A549 (cell line): ENCODE measurements at regions of chr5 and their contacts with region 1.

Region 1: GRCh38 chr5:150350524-150351344 is 6.8 kb upstream of the TCOF1 start:
- DNase-seq: peak; percentile 83 to 84
- ATAC-seq: peak; percentile 94 to 96
- H3K4me3 ChIP-seq: no peak overlapping the region
- H3K27ac ChIP-seq: peak overlapping the region; percentile 46 to 72; a peak in 5 of 6 replicates
- H3K4me1 ChIP-seq: peaks cover 24% of the 10 kb centered on the region
- CTCF ChIP-seq: peak; percentile 93
- EP300 ChIP-seq: no peak
- POLR2A ChIP-seq: no peak
- RAD21 ChIP-seq: peak; percentile 97

Region 2: GRCh38 chr5:150143350-150144245 is 207.1 kb before region 1 on chr5:
- CTCF ChIA-PET with region 1: no interaction called
- POLR2A ChIA-PET with region 1: no interaction called
- DNase-seq: peak; percentile 57 to 62
- ATAC-seq: peak; percentile 75
- H3K4me3 ChIP-seq: no peak overlapping the region
- H3K27ac ChIP-seq: peak overlapping the region; percentile 93 to 98
- H3K4me1 ChIP-seq: peaks cover 57% of the 10 kb centered on the region
- CTCF ChIP-seq: no peak
- EP300 ChIP-seq: peak in 1 of 2 experiments; percentile 28; a peak in 1 of 5 replicates
- POLR2A ChIP-seq: no peak
- RAD21 ChIP-seq: no peak

Region 3: GRCh38 chr5:150161242-150162141 is 189.2 kb before region 1 on chr5:
- CTCF ChIA-PET with region 1: interaction called, 59 read pairs
- POLR2A ChIA-PET with region 1: no interaction called
- DNase-seq: peak; percentile 82 to 92
- ATAC-seq: peak; percentile 89 to 95
- H3K4me3 ChIP-seq: peak overlapping the region; percentile 37
- H3K27ac ChIP-seq: peak overlapping the region; percentile 75 to 79
- H3K4me1 ChIP-seq: peaks cover 8% of the 10 kb centered on the region; the same call in 1 of the 3 replicates
- CTCF ChIP-seq: peak; percentile 67
- EP300 ChIP-seq: no peak
- POLR2A ChIP-seq: no peak
- RAD21 ChIP-seq: peak; percentile 70 to 87

Region 4: DNA sequence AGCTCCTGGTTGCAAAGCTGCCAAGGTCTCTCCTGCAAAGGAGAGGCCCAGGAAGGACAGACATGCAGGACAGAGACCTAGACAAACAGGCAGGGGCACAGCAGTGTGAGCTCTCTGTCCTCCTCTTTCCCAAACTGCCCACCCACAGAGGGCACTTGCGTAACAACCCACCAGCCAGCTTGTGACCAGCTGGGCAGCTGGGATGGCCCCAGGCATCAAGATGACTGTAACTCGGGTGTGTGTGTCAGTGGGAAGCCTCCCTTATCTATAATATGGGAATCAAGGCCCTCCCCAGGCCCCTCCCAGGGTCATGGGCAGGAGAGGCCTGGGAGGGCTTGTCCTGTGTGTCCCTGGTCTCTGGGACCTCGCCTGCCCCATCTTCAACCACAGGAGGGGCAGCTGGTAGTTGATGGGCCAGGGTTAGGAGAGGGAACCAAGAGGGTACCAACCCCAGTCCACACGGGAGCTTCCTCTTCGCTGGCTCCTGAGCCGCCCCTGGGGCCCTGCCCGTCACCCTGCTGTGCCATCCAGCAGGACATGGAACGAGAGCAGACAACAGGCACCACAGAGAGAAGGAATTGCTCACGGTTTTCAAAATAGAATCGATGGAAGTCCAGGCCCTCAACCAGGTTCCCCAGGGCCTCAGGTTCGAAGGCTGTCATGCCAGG is 123.0 kb before region 1 on chr5:
- CTCF ChIA-PET with region 1: interaction called, 23 read pairs
- POLR2A ChIA-PET with region 1: no interaction called
- DNase-seq: peak in 1 of 2 experiments; percentile 7
- ATAC-seq: peak; percentile 23 to 37; a peak in 4 of 6 replicates
- H3K4me3 ChIP-seq: no peak overlapping the region
- H3K27ac ChIP-seq: peak overlapping the region in 1 of 2 experiments; percentile 30; a peak in 1 of 6 replicates
- H3K4me1 ChIP-seq: peaks cover 7% of the 10 kb centered on the region; the same call in 1 of the 3 replicates
- CTCF ChIP-seq: no peak
- EP300 ChIP-seq: no peak
- POLR2A ChIP-seq: no peak
- RAD21 ChIP-seq: no peak

Region 5: DNA sequence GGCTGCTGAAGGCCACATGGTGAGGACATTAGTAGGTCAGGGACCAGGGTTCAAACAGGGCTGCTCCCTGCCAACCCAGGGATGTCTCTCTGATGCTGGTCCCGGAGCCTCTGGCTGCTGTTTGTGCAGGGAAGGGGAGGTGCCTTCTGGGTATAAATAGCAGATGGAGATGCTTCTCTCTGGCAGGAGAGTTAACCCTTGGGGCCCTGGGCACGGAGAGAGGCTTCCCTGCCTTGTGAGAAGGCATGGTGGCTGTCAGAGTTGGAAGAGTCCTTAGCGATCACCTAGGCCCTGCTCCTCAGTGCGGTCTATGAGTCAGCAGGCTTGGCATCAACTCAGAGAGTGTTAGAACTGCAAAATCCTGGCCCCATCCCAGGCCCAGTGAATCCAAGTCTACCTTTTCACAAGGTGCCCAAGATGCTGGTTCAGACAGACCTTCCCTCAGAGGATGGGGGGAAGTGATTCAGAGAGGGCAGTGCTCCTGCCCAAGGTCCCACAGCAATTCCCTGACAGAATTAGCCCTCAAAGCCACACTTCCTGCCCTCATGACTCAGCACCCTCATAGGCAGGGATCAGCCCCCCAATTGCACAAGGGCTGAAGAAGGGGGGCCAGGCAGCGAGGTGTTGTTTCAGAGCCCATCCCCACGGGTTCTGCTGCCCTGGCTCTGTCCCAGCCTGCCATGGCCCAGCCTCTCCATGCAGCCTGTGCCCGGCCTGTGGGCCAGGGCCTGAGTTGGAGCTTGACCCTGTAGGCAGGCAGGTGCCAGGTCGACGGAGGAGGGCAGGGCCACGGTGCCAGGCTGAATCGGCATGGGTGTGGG is 86.7 kb before region 1 on chr5:
- CTCF ChIA-PET with region 1: interaction called, 155 read pairs
- POLR2A ChIA-PET with region 1: no interaction called
- DNase-seq: peak; percentile 77 to 81
- ATAC-seq: peak; percentile 81 to 90
- H3K4me3 ChIP-seq: no peak overlapping the region
- H3K27ac ChIP-seq: peak overlapping the region; percentile 63 to 88
- H3K4me1 ChIP-seq: peaks cover 53% of the 10 kb centered on the region
- CTCF ChIP-seq: no peak
- EP300 ChIP-seq: no peak
- POLR2A ChIP-seq: no peak
- RAD21 ChIP-seq: no peak

Region 6: DNA sequence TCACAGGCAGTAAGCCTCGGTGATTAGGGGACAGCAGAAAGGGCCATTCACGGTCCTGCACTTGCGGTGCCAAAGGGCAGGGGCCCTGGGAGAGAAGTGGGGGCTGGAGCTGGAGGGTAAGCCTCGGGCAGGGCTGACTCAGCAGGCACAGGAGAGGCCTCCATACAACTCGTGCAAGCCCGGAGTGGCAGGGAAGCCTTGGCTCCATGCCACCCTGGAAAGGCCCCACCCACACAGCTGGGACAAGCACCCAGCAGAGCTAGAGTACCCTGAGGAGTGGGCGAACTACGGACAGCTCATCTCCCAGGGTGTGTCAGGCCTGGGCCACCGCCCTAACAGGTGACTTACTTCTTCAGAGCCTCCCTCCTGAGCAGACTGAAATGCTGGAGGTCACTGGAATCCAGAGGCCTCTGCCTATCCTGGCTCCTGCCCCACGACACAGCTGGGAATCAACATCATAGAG is 55.5 kb before region 1 on chr5:
- CTCF ChIA-PET with region 1: interaction called, 75 read pairs
- POLR2A ChIA-PET with region 1: no interaction called
- DNase-seq: peak in 1 of 2 experiments; percentile 44
- ATAC-seq: peak; percentile 44 to 67; a peak in 5 of 6 replicates
- H3K4me3 ChIP-seq: no peak overlapping the region
- H3K27ac ChIP-seq: peak overlapping the region; percentile 74 to 87
- H3K4me1 ChIP-seq: peaks cover 49% of the 10 kb centered on the region
- CTCF ChIP-seq: no peak
- EP300 ChIP-seq: no peak
- POLR2A ChIP-seq: no peak
- RAD21 ChIP-seq: no peak

Region 7: GRCh38 chr5:150329881-150330876 is 20.6 kb before region 1 on chr5:
- CTCF ChIA-PET with region 1: interaction called, 58 read pairs
- POLR2A ChIA-PET with region 1: no interaction called
- DNase-seq: no peak
- ATAC-seq: no peak
- H3K4me3 ChIP-seq: no peak overlapping the region
- H3K27ac ChIP-seq: peak overlapping the region in 1 of 2 experiments; percentile 4; a peak in 1 of 6 replicates
- H3K4me1 ChIP-seq: no peaks in the 10 kb centered on the region; the same call in 2 of the 3 replicates
- CTCF ChIP-seq: no peak
- EP300 ChIP-seq: no peak
- POLR2A ChIP-seq: no peak
- RAD21 ChIP-seq: no peak

Region 8: GRCh38 chr5:150546228-150546654 is 195.5 kb after region 1 on chr5:
- CTCF ChIA-PET with region 1: no interaction called
- POLR2A ChIA-PET with region 1: no interaction called
- DNase-seq: no peak
- ATAC-seq: no peak
- H3K4me3 ChIP-seq: no peak overlapping the region
- H3K27ac ChIP-seq: no peak overlapping the region
- H3K4me1 ChIP-seq: peaks cover 16% of the 10 kb centered on the region
- CTCF ChIP-seq: no peak
- EP300 ChIP-seq: no peak
- POLR2A ChIP-seq: no peak
- RAD21 ChIP-seq: no peak

Region 9: GRCh38 chr5:150758531-150759333 is 408.0 kb after region 1 on chr5 and contains the start of gene DCTN4:
- CTCF ChIA-PET with region 1: no interaction called
- POLR2A ChIA-PET with region 1: no interaction called
- DNase-seq: peak; percentile 98 to 99
- ATAC-seq: peak; percentile 95 to 98
- H3K4me3 ChIP-seq: peak within 1 kb of the TSS; percentile 58
- H3K27ac ChIP-seq: peak within 1 kb of the TSS; percentile 91 to 93
- H3K4me1 ChIP-seq: peaks cover 11% of the 10 kb centered on the region
- CTCF ChIP-seq: no peak
- EP300 ChIP-seq: no peak
- POLR2A ChIP-seq: peak; percentile 66
- RAD21 ChIP-seq: no peak
- polyA plus RNA-seq, gene DCTN4: 34.8 and 38.4 TPM in 2 replicates